Endothelial cell of umbilical vein (primary cell): ENCODE measurements at regions of chr17 and their contacts with region 1.

Region 1: GRCh38 chr17:1455797-1456599 is at the start of gene CRK:
- DNase-seq: peak; percentile 97
- H3K4me3 ChIP-seq: peak within 1 kb of the TSS; percentile 83 to 95 (median 89)
- H3K27ac ChIP-seq: peak within 1 kb of the TSS; percentile 91
- H3K4me1 ChIP-seq: peaks cover 18% of the 10 kb centered on the region
- H3K27me3 ChIP-seq: no peaks in the 10 kb centered on the region
- CTCF ChIP-seq: no peak
- POLR2A ChIP-seq: peak; percentile 98
- total RNA-seq, gene CRK: 67.2 and 71.3 TPM in 2 replicates

Region 2: GRCh38 chr17:1488030-1488863 is 32.2 kb after region 1 on chr17:
- CTCF ChIA-PET with region 1: no interaction called
- POLR2A ChIA-PET with region 1: no interaction called
- dilution Hi-C with region 1: no loop called
- intact Hi-C with region 1: loop called (anchors 1 kb)
- DNase-seq: peak; percentile 80
- H3K4me3 ChIP-seq: peak overlapping the region in 2 of 3 experiments; percentile 15 to 21
- H3K27ac ChIP-seq: peak overlapping the region; percentile 61
- H3K4me1 ChIP-seq: peaks cover 37% of the 10 kb centered on the region
- H3K27me3 ChIP-seq: no peaks in the 10 kb centered on the region
- CTCF ChIP-seq: no peak
- POLR2A ChIP-seq: peak; percentile 60

Region 3: DNA sequence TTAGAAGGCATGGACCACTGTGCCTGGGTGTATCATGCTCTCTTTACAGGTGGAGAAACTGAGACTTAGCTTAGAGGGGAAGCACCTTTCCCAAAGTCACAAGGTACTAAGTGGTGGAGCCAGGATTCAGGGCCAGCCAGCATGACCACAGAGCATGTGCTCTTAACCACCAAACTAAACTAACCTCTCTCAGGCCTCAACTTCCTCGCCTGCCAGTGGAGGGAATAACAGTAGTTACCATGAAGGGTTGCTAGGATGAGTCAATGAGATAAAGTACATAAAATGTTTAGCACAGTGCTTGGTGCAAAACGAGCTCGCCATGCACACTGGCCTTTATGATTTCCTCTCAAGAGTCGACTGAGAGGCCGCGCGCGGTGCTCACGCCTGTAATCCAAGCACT is 42.9 kb after region 1 on chr17:
- CTCF ChIA-PET with region 1: no interaction called
- POLR2A ChIA-PET with region 1: no interaction called
- dilution Hi-C with region 1: no loop called
- intact Hi-C with region 1: no loop called
- DNase-seq: no peak
- H3K4me3 ChIP-seq: no peak overlapping the region
- H3K27ac ChIP-seq: no peak overlapping the region
- H3K4me1 ChIP-seq: peaks cover 2% of the 10 kb centered on the region
- H3K27me3 ChIP-seq: no peaks in the 10 kb centered on the region
- CTCF ChIP-seq: no peak
- POLR2A ChIP-seq: no peak

Region 4: DNA sequence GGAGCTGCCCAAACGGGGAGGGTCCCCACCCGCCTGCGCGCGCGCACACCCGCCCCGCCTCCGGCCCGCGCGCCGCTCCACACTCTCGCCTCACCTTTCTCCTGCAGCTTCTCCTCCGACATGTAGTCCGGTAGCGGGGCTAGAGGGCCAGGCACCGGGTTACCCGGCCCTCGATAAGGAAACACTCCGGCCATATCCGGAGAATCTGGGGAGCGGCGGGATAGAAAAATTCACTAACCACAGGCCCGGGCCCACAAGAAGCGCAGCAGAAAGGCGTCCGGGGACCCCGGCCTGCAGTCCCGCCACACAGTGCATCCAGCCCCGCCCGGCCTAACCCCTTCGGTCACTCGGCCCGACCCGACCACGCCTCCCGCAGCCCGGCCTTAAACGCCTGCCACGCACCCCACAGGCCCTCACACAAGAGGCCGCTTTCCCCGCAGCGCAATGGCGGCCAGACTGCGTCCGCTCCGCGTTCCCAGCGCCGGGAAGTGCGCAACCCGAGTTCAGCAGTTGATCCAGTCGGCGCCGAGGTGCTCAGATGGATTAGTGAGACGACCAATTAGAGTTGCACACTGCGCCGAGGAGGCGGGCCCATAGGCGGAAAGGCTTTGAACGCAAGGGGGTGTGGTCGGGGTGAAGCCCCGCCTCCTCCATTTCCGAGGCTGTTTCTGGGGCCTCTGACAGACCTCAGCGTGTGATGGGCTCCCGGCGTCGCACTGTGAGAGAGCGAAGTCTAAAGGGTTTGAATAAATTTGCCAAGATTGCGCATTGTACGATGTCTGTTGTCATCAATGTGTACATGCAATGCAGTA is 228.6 kb after region 1 on chr17 and contains the start of gene PRPF8:
- CTCF ChIA-PET with region 1: no interaction called
- POLR2A ChIA-PET with region 1: no interaction called
- dilution Hi-C with region 1: no loop called
- intact Hi-C with region 1: no loop called
- DNase-seq: peak; percentile 99
- H3K4me3 ChIP-seq: peak within 1 kb of the TSS; percentile 71 to 95 (median 77)
- H3K27ac ChIP-seq: peak within 1 kb of the TSS; percentile 54
- H3K4me1 ChIP-seq: peaks cover 8% of the 10 kb centered on the region
- H3K27me3 ChIP-seq: no peaks in the 10 kb centered on the region
- CTCF ChIP-seq: no peak
- POLR2A ChIP-seq: peak; percentile 88
- total RNA-seq, gene PRPF8: 282 and 301 TPM in 2 replicates